Activated CD4-positive, alpha-beta T cell treated with anti-CD3 and anti-CD28 coated beads, Interleukin-2, amount 10 ng/mL, durations not matched to agents 7 days and 5 days (primary cell): ENCODE measurements at regions of chr2 and their contacts with region 1.

Region 1: GRCh38 chr2:10120158-10120886 is 2.2 kb upstream of the RRM2 start:
- DNase-seq: peak; percentile 96
- H3K4me3 Mint-ChIP-seq: peak overlapping the region; percentile 98
- H3K27ac Mint-ChIP-seq: peak overlapping the region; percentile 99
- H3K4me1 Mint-ChIP-seq: peaks cover 57% of the 10 kb centered on the region
- H3K27me3 Mint-ChIP-seq: no peaks in the 10 kb centered on the region

Region 2: DNA sequence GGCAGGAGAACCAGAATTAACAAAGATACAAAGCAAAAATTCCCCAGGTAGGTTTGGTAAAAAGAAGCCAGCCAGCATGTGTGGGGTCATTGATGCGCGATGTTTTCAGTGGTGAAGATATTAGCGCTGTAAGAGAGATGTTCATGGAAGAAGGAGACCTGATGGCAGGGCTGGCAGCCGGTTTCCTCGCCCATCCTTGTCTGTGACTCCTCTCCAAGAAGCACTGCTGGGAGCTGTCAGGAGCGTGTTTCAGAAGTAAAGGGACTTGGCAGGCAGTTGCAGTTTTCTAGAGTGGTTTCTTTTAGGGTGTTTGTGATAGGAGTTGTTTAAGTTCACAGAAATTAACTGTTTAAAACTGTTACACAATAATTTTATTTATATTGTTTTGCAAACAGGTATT is 252.4 kb before region 1 on chr2:
- CTCF ChIA-PET with region 1: no interaction called
- POLR2A ChIA-PET with region 1: no interaction called
- DNase-seq: no peak
- H3K4me3 Mint-ChIP-seq: no peak overlapping the region
- H3K27ac Mint-ChIP-seq: no peak overlapping the region
- H3K4me1 Mint-ChIP-seq: no peaks in the 10 kb centered on the region
- H3K27me3 Mint-ChIP-seq: no peaks in the 10 kb centered on the region

Region 3: GRCh38 chr2:10012928-10013461 is 107.3 kb before region 1 on chr2:
- CTCF ChIA-PET with region 1: no interaction called
- POLR2A ChIA-PET with region 1: no interaction called
- DNase-seq: no peak
- H3K4me3 Mint-ChIP-seq: no peak overlapping the region
- H3K27ac Mint-ChIP-seq: no peak overlapping the region
- H3K4me1 Mint-ChIP-seq: no peaks in the 10 kb centered on the region
- H3K27me3 Mint-ChIP-seq: peaks cover 8% of the 10 kb centered on the region

Region 4: DNA sequence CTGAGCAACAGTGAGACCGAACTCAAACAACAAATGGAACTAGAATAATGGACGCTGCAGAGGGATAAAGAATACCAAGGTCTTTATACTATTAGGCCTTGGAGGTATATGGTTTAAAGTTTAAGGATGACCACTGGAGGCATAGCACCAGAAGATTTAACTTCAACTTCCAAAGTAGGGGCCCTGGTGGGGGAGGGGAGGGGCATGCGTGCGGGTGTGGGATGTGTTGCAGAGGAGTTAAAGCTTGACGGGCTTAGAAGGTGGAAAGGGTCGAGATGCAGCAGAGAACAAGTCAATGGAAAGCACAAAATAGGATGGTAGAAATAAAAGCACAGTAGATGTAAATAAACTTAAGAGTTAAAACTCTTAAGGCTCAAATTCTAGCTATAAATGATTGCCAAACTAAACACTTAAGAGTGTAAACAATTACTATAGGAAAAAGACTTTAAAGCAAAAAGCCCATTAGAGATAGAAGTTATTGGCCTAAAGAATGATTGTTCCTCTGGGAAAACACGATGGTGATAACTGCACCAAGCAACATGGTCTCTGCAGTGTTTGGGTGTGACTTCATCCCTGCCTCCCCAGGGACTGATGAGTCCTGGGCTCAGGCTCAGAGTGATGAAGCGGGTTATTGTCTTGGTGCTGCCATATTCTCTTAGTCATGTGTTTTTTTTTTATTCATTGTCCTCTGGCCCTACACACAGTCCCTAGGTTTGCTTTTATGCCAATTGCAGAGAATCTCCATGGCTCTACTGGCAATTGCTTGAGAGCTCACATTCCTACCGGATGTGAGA is 15.2 kb after region 1 on chr2:
- CTCF ChIA-PET with region 1: interaction called, 17 read pairs
- POLR2A ChIA-PET with region 1: no interaction called
- DNase-seq: no peak
- H3K4me3 Mint-ChIP-seq: no peak overlapping the region
- H3K27ac Mint-ChIP-seq: peak overlapping the region; percentile 27
- H3K4me1 Mint-ChIP-seq: peaks cover 48% of the 10 kb centered on the region
- H3K27me3 Mint-ChIP-seq: no peaks in the 10 kb centered on the region

Region 5: DNA sequence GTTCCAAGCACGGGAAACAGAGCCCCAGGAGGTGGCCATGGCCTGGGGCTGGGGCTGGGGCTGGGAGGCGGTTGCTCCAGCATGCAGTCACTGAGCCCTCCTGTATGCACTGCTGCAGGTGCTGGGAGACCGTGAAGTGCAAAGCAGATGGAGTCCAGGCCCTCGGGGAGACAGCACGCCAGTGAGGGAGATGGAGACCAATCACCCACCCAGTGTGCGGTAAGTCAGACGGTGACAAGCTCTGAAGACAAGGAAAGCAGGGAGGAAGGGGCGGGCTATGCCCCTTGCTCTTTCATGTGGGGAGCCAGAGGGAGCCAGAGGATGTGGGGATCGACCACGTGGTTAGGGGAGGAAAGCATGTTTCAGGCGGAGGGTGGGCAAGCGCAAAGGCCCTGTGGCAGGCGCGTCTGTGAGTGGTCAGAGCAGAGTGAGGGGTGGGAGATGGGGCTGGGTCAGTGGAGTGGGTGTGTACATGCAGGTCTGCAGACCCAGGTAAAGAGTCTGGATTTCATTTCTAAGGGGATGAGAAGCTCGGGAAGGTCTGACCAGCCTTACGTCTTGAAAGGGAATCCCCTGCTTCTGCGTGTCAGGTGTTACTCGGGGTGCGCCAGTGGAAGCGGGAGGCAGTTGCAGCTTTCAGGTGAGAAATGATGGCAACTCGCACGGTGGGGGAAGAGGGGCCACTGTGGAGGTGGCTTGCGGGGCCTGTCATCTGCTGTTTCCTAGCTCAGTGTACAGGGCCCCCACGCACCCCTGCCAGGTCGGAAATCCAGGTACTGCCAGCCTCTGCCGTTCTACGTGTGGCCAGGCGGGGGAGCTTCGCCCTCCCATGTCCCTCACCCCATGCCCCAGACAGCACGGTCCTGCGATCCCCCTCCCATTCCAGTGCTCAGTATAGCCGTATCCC is 21.7 kb after region 1 on chr2:
- CTCF ChIA-PET with region 1: interaction called, 11 read pairs
- POLR2A ChIA-PET with region 1: interaction called, 3 read pairs
- DNase-seq: peak; percentile 72
- H3K4me3 Mint-ChIP-seq: peak overlapping the region; percentile 38
- H3K27ac Mint-ChIP-seq: peak overlapping the region; percentile 82
- H3K4me1 Mint-ChIP-seq: peaks cover 47% of the 10 kb centered on the region
- H3K27me3 Mint-ChIP-seq: no peaks in the 10 kb centered on the region